ENCODE measurements at regions of chr1 and their contacts with region 1.

Region 1: DNA sequence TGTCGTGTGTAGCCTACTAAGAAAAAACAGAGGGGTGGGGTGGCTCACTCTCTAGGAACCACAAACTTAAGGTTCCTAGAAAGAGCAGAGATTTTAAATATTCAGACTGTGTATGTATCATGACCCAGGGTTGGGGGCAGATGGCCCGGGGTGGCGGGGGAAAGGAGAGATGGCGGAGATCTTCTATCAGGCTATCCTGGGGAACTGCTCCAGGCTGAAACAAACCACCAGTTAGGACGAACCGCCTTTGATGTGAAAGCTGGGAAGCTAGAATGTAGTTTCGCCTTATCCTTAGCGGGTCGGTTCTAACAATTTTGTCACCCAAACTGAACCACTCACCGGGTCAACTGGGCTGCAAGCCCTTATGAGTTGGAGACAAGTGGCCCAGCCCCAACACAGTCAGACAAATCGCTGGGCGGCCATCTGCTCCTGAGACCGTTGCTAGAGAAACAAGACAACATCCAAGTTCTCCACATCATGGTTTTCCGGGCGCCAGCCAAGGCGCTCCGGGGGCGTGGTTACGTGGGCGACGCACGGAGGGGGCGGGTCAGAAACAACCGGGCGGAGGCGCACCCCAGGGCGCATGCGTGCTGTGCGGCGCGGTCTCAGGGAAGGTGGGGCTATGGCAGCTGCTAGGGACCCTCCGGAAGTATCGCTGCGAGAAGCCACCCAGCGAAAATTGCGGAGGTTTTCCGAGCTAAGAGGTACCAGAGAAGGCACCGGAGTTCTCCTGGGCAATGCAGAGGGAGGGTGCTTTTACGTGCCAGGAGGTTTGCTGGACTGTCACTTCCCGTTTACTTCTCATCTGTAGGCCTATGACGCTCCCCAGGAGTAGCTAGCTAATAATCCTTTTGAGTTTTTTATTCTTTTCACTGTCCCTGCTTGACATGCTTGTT is at the starts of genes FPGT and LRRIQ3:
- DNase-seq: peak; percentile 80 to 98
- H3K4me3 ChIP-seq: peak within 1 kb of the TSS; percentile 81 to 83
- H3K27ac ChIP-seq: peak within 1 kb of the TSS; percentile 73 to 81
- H3K4me1 ChIP-seq: peaks cover 0 to 5% of the 10 kb centered on the region in 2 donors
- H3K27me3 ChIP-seq: no peaks in the 10 kb centered on the region
- CTCF ChIP-seq: no peak
- total RNA-seq, gene FPGT: 8.3 TPM
- total RNA-seq, gene LRRIQ3: not detected

Region 2: DNA sequence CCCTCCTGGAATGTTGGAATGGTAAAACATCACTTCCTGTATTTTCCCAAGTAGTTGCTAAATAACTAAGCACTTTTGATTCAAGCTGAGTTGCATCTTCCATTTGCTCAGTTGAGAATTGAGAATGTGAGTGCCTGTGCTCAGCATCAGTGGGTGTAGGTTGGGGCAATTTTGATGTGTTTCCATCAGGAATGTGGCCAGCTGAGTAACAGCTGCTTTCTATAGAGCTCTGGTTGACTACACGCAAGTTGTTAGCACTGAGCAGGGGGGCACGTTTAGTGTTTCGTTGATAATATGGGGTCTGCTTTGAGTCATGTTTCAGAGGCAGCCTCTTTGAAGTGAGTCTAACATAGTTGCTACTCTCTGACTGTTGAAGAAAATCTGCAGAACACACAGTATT is 273.0 kb after region 1 on chr1:
- intact Hi-C with region 1: loop called (anchors 5 kb)
- DNase-seq: no peak
- H3K4me3 ChIP-seq: no peak overlapping the region
- H3K27ac ChIP-seq: peak overlapping the region; percentile 13 to 63
- H3K4me1 ChIP-seq: peaks cover 0 to 4% of the 10 kb centered on the region in 2 donors
- H3K27me3 ChIP-seq: no peaks in the 10 kb centered on the region
- CTCF ChIP-seq: no peak

Region 3: GRCh38 chr1:74733604-74734484 is 535.9 kb after region 1 on chr1:
- intact Hi-C with region 1: loop called (anchors 5 kb)
- DNase-seq: no peak
- H3K4me3 ChIP-seq: peak overlapping the region; percentile 65 to 81
- H3K27ac ChIP-seq: peak overlapping the region; percentile 65 to 84
- H3K4me1 ChIP-seq: peaks cover 0 to 26% of the 10 kb centered on the region in 2 donors
- H3K27me3 ChIP-seq: no peaks in the 10 kb centered on the region
- CTCF ChIP-seq: peak; percentile 25 to 73 (median 68)

Measured in ascending aorta (tissue), 2 donors.